Endothelial cell of umbilical vein (primary cell): ENCODE measurements at regions of chr6 and their contacts with region 1.

Region 1: GRCh38 chr6:89371849-89372505 is 19.5 kb upstream of the UBE2J1 start:
- DNase-seq: peak; percentile 61
- H3K4me3 ChIP-seq: no peak overlapping the region
- H3K27ac ChIP-seq: no peak overlapping the region
- H3K4me1 ChIP-seq: peaks cover 3% of the 10 kb centered on the region
- H3K27me3 ChIP-seq: no peaks in the 10 kb centered on the region
- CTCF ChIP-seq: peak; percentile 96 to 98
- POLR2A ChIP-seq: no peak

Region 2: GRCh38 chr6:89122625-89123024 is 249.4 kb before region 1 on chr6:
- CTCF ChIA-PET with region 1: interaction called, 7 read pairs
- POLR2A ChIA-PET with region 1: no interaction called
- dilution Hi-C with region 1: no loop called
- intact Hi-C with region 1: loop called (anchors 1 kb)
- DNase-seq: peak; percentile 52
- H3K4me3 ChIP-seq: no peak overlapping the region
- H3K27ac ChIP-seq: no peak overlapping the region
- H3K4me1 ChIP-seq: peaks cover 2% of the 10 kb centered on the region
- H3K27me3 ChIP-seq: peaks cover 6 to 18% of the 10 kb centered on the region in 2 experiments
- CTCF ChIP-seq: peak in 1 of 2 donors; percentile 31
- POLR2A ChIP-seq: no peak

Region 3: GRCh38 chr6:89297695-89298351 is 74.2 kb before region 1 on chr6:
- CTCF ChIA-PET with region 1: interaction called, 16 read pairs
- POLR2A ChIA-PET with region 1: no interaction called
- dilution Hi-C with region 1: no loop called
- intact Hi-C with region 1: loop called (anchors 5 kb)
- DNase-seq: peak; percentile 97
- H3K4me3 ChIP-seq: peak overlapping the region in 1 of 3 experiments; percentile 47
- H3K27ac ChIP-seq: peak overlapping the region; percentile 84
- H3K4me1 ChIP-seq: peaks cover 28% of the 10 kb centered on the region
- H3K27me3 ChIP-seq: no peaks in the 10 kb centered on the region
- CTCF ChIP-seq: no peak
- POLR2A ChIP-seq: no peak

Region 4: GRCh38 chr6:89360415-89360999 is 11.5 kb before region 1 on chr6:
- CTCF ChIA-PET with region 1: interaction called, 56 read pairs
- POLR2A ChIA-PET with region 1: no interaction called
- dilution Hi-C with region 1: no loop called
- intact Hi-C with region 1: no loop called
- DNase-seq: no peak
- H3K4me3 ChIP-seq: no peak overlapping the region
- H3K27ac ChIP-seq: no peak overlapping the region
- H3K4me1 ChIP-seq: peaks cover 7% of the 10 kb centered on the region
- H3K27me3 ChIP-seq: no peaks in the 10 kb centered on the region
- CTCF ChIP-seq: no peak
- POLR2A ChIP-seq: no peak

Region 5: DNA sequence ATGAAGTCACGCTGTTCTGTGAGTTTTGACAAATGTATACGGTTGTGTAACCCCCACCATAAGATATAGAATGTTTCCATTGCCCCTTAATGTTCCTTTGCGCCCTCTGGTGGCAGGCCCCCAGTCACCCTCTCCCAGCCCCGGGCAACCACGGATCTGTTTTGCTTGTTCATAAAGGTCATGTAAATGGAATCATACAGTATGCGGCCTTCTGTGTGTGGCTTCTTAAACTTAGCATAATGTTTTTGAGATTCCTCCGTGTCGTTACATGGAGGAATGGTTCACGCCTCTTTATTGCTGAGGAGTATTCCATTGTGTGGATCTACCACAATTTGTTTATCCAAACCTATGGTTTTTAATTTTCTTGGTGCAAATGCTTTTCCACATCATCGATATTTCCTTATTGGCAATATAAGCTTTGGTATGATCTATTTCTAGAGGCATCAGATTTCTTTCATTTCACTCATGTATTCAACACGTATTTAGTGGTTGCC is 238.2 kb after region 1 on chr6:
- CTCF ChIA-PET with region 1: interaction called, 11 read pairs
- POLR2A ChIA-PET with region 1: interaction called, 5 read pairs
- dilution Hi-C with region 1: no loop called
- intact Hi-C with region 1: loop called (anchors 1 kb)
- DNase-seq: peak; percentile 54
- H3K4me3 ChIP-seq: no peak overlapping the region
- H3K27ac ChIP-seq: no peak overlapping the region
- H3K4me1 ChIP-seq: peaks cover 6% of the 10 kb centered on the region
- H3K27me3 ChIP-seq: no peaks in the 10 kb centered on the region
- CTCF ChIP-seq: peak; percentile 77 to 82
- POLR2A ChIP-seq: no peak